Activated CD4-positive, alpha-beta memory T cell treated with anti-CD3 and anti-CD28 coated beads for 36 hours (primary cell): ENCODE measurements at regions of chr18 and their contacts with region 1.

Region 1: DNA sequence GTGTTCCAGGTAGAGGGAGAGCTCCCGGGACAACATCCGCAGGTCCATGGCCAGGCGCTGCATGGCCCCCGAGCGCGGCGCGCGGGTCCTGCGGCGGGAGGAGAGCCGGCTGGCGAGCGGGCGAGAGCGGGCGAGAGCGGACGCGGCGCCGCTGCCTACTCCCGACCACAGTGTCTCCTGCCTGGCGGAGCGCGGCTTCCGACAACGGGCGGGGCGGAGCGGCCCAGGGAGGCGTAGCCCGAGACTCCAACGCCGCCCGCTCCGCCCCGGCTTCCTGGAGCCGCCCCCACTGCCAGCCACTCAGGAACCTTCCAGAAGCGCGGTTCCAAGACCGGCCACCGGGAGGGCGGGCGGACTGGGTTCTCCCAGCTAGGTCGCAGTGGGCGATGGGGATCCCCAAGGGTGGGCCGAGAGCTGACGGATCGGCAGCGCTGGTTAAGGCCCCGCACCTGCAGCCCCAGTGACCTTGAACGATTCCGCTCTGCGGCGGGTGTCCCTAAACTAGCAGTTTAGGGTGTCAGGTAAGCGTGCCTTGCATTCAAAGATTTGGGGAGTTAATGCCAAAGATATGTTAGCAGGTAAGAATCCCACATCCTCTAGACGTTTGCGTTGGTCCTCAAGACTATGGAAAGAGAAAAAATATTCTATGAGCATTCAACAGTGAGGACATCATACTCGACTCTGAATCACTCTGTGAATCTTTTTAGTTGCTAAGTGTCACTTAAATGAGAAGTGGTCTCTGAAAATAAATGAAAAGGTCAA is at the start of gene ABHD3:
- DNase-seq: peak; percentile 95
- H3K4me3 Mint-ChIP-seq: peak within 1 kb of the TSS; percentile 91
- H3K27ac Mint-ChIP-seq: peak within 1 kb of the TSS; percentile 88
- H3K4me1 Mint-ChIP-seq: peaks cover 21% of the 10 kb centered on the region
- H3K27me3 Mint-ChIP-seq: no peaks in the 10 kb centered on the region
- total RNA-seq, gene ABHD3: 18.7 to 22.1 TPM

Region 2: DNA sequence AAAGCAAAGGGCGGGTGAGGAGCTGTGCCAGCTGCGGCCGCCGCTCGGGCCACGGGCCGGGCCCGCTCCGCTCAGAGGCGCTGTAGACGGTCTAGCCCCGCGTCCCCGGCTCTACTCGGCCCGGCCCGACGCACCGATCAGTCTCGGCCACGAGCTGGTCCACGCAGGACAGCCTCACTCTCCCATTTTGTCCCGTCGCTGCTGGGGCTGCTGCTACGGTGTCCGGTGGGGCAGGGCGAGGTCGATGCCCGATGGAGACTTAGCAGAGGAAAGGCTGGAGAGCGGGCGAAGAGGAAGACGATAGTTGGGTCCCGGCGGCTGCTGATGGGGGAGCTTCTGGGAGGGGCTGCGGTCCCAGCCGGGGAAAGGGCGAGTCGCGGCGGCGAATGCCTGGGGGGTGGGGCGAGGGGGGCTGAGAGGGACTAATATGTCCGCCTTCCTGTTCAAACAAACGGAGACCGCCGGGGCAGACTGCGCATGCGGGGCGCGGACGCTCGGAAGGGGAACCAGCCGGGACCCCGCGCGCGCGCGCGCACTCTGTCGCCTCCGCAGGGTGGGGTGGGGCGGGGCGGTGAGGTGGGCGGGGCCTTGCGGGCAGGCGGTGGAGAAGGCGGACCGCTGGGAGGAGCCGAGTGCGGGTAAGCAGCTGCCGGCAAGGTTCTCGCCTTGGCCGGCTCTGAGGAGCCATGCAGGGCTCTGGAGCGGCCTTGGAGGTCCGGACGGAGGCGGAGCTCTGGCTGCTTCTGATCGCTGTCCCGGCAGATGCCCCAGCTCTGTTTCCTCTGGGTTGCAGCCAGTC is 593.2 kb before region 1 on chr18 and contains the start of gene ROCK1:
- CTCF ChIA-PET with region 1: no interaction called
- POLR2A ChIA-PET with region 1: no interaction called
- intact Hi-C with region 1: loop called (anchors 1 kb)
- DNase-seq: peak; percentile 99
- H3K4me3 Mint-ChIP-seq: no peak within 1 kb of the TSS
- H3K27ac Mint-ChIP-seq: peak within 1 kb of the TSS; percentile 95
- H3K4me1 Mint-ChIP-seq: no peaks in the 10 kb centered on the region
- H3K27me3 Mint-ChIP-seq: no peaks in the 10 kb centered on the region
- total RNA-seq, gene ROCK1: 54.9 to 59.4 TPM

Region 3: DNA sequence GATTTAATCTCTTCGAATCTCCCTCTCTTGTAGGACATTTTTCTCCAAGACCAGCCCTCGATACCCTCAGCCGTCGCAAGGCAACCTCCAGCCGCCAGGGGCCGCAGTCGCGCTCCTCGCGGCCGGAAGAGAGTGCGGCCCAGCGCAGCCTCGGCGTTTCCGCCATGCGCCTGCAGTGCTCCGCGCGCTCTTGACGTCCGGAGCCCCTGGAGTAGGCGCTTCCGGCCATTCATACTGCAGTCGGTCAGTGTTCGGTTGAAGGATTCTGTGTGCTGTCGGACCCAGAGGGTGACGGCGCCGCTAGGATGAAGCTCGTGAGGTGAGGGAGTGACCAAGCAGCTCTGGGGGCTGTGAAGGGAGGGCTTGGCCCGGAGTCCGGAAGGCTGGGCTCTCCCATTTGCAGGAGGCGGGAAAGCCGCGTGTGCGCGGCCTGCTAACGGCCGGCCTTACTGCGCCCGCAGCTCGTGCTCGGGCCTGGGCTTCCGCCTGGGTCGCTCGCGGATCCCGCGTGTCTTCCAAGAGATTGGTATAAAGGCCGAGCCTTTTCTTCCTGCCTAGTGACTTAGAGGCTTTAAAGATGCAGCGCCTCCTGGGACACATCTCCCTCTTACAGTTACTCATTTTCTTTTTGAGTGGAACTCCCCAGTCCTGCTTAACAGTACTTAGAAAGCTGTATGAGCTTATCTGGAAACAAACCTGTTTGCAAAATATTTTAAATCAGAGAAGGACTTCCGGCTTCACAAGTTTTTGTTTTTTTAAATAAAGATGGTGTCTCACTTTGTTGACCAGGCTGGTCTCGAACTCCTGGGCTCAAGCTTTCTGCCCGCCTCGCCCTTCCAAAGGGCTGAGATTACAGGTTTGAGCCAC is 92.4 kb before region 1 on chr18 and contains the start of gene SNRPD1:
- CTCF ChIA-PET with region 1: interaction called, 6 read pairs
- POLR2A ChIA-PET with region 1: interaction called, 7 read pairs
- intact Hi-C with region 1: loop called (anchors 1 kb)
- DNase-seq: peak; percentile 94
- H3K4me3 Mint-ChIP-seq: peak within 1 kb of the TSS; percentile 86
- H3K27ac Mint-ChIP-seq: peak within 1 kb of the TSS; percentile 94
- H3K4me1 Mint-ChIP-seq: peaks cover 31% of the 10 kb centered on the region
- H3K27me3 Mint-ChIP-seq: no peaks in the 10 kb centered on the region
- total RNA-seq, gene SNRPD1: 153 to 164 TPM

Region 4: DNA sequence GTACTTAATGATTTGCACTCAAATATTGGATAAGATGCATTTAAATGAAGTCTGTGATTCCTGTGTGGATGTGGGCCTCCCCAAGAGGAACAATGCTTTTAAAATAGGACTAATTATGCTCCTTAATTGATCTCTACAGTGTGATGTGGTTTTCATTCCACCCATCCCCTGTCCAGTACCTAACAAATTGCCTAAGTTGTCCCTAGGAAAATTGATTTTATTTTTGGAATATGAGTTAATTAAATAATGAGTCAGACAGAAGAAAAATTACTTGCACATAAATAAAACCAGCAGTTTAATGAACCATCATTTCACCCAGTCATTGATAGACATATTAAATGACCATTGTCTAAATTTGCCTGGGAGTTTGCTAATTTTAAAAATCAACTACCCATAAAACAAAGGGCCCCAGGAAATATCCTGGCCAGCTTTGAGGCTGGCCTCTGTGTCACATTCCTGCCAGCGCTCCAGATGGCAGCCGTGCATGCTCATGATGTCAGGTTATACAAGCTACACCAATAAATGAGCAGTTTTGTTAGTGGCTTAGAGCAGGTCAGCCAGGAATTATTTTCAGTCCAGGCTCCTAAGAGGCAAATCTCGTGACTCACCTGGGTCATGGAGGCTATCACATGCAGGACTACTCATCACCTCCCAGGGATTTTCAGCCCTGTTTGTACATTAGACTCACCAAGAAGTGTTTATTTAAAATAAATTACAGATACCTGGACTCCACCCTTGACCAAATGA is 32.1 kb before region 1 on chr18:
- CTCF ChIA-PET with region 1: no interaction called
- POLR2A ChIA-PET with region 1: interaction called, 3 read pairs
- intact Hi-C with region 1: loop called (anchors 2 kb)
- DNase-seq: no peak
- H3K4me3 Mint-ChIP-seq: no peak overlapping the region
- H3K27ac Mint-ChIP-seq: no peak overlapping the region
- H3K4me1 Mint-ChIP-seq: peaks cover 9% of the 10 kb centered on the region
- H3K27me3 Mint-ChIP-seq: no peaks in the 10 kb centered on the region

Region 5: DNA sequence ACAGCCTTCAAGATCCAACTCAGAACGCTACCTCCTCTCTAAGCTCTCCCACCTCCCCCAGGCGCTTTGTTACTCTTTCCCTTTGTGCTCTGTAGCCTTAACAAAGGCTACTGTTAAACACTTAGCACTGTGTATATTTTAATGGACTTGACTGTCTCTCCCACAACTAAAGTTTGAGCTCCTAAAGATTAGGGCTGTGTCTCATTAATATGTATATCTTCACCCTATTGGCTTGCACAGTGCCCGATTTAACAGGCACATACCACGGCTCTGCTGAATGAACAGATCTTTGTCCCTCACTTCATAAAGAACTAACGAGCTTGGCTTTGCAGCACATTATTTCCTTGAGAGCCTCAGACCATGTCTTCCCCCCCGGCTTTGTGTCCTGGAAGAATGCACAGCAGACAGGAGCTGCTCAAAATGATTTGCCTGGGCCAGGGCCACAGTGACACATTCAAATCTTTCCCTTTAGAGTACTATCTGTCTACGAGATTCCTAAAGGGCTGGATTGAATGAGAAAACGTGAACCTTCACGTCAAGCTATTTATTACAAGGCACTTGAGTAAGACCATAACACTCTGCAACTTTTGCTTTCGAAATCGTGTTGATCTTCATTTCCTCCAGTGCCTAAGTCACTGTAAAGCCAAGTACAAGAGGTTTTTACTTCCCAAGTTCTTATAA is 22.3 kb before region 1 on chr18:
- CTCF ChIA-PET with region 1: interaction called, 3 read pairs
- POLR2A ChIA-PET with region 1: interaction called, 6 read pairs
- intact Hi-C with region 1: loop called (anchors 1 kb)
- DNase-seq: peak; percentile 36
- H3K4me3 Mint-ChIP-seq: no peak overlapping the region
- H3K27ac Mint-ChIP-seq: no peak overlapping the region
- H3K4me1 Mint-ChIP-seq: peaks cover 25% of the 10 kb centered on the region
- H3K27me3 Mint-ChIP-seq: no peaks in the 10 kb centered on the region